ENCODE measurements at regions of chr4 and their contacts with region 1.

Region 1: DNA sequence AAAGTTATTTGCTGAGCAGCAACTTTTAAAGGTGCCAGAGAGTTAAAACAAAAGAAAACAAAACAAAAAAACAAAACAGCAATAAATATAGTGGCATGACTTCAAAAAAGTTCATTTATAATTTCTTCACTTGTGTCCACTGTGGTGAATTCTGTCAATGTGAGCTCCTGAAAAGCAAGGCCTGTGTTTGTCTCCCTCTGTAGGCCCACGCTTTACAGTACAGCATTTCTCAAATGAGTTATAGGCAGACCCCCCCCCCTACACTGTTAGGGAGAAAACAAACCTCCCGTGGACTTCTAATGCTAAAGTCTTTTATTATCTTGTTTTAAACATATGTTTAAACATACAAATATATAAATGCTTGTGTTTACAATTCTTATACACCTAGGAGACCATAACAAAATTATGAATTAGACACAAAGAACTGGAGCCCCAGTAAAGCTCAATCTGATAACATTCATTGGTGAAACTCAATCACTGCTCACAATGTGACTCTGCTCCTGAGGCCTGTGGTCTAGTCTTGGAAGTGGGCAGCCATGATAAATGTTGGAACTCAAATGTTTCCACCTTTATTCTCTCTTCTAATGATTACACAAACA is 47.0 kb upstream of the SCOC start:
- DNase-seq: no peak
- ATAC-seq: no peak
- H3K4me3 ChIP-seq: no peak overlapping the region
- H3K4me3 Mint-ChIP-seq: no peak overlapping the region
- H3K27ac ChIP-seq: no peak overlapping the region
- H3K27ac Mint-ChIP-seq: no peak overlapping the region
- H3K4me1 ChIP-seq: no peaks in the 10 kb centered on the region
- H3K4me1 Mint-ChIP-seq: peaks cover 0 to 11% (median 3%) of the 10 kb centered on the region in 7 donors
- H3K27me3 ChIP-seq: no peaks in the 10 kb centered on the region
- H3K27me3 Mint-ChIP-seq: peaks cover 0 to 28% (median 4%) of the 10 kb centered on the region in 5 donors

Region 2: GRCh38 chr4:139734875-139735380 is 591.6 kb before region 1 on chr4:
- CTCF ChIA-PET with region 1: no interaction called
- POLR2A ChIA-PET with region 1: no interaction called
- intact Hi-C with region 1: loop called in 1 of 2 experiments (anchors 10 kb)
- DNase-seq: peak; percentile 12 to 67 (median 45)
- ATAC-seq: peak; percentile 87
- H3K4me3 ChIP-seq: peak overlapping the region; percentile 44
- H3K4me3 Mint-ChIP-seq: peak overlapping the region; percentile 70 to 89 (median 78)
- H3K27ac ChIP-seq: no peak overlapping the region
- H3K27ac Mint-ChIP-seq: peak overlapping the region in 1 of 9 donors; percentile 29
- H3K4me1 ChIP-seq: peaks cover 0 to 5% of the 10 kb centered on the region in 2 donors
- H3K4me1 Mint-ChIP-seq: peaks cover 6 to 17% (median 13%) of the 10 kb centered on the region in 7 donors
- H3K27me3 ChIP-seq: no peaks in the 10 kb centered on the region
- H3K27me3 Mint-ChIP-seq: peaks cover 30 to 58% (median 39%) of the 10 kb centered on the region in 5 donors

Region 3: GRCh38 chr4:140351093-140352075 is 24.9 kb after region 1 on chr4:
- CTCF ChIA-PET with region 1: interaction called, 4 read pairs
- POLR2A ChIA-PET with region 1: no interaction called
- intact Hi-C with region 1: loop called in 1 of 2 experiments (anchors 2 kb)
- DNase-seq: no peak
- ATAC-seq: no peak
- H3K4me3 ChIP-seq: no peak overlapping the region
- H3K4me3 Mint-ChIP-seq: no peak overlapping the region
- H3K27ac ChIP-seq: no peak overlapping the region
- H3K27ac Mint-ChIP-seq: peak overlapping the region in 2 of 9 donors; percentile 22 to 38
- H3K4me1 ChIP-seq: peaks cover 5 to 7% of the 10 kb centered on the region in 2 donors
- H3K4me1 Mint-ChIP-seq: peaks cover 5 to 28% (median 20%) of the 10 kb centered on the region in 7 donors
- H3K27me3 ChIP-seq: no peaks in the 10 kb centered on the region
- H3K27me3 Mint-ChIP-seq: peaks cover 0 to 22% (median 5%) of the 10 kb centered on the region in 5 donors

Region 4: GRCh38 chr4:140609548-140610425 is 283.3 kb after region 1 on chr4:
- CTCF ChIA-PET with region 1: interaction called, 3 read pairs
- POLR2A ChIA-PET with region 1: no interaction called
- intact Hi-C with region 1: loop called in 1 of 2 experiments (anchors 1 kb)
- DNase-seq: peak in 5 of 9 donors; percentile 21 to 49 (median 25)
- ATAC-seq: peak; percentile 73
- H3K4me3 ChIP-seq: no peak overlapping the region
- H3K4me3 Mint-ChIP-seq: no peak overlapping the region
- H3K27ac ChIP-seq: no peak overlapping the region
- H3K27ac Mint-ChIP-seq: no peak overlapping the region
- H3K4me1 ChIP-seq: no peaks in the 10 kb centered on the region
- H3K4me1 Mint-ChIP-seq: peaks cover 0 to 2% (median 0%) of the 10 kb centered on the region in 7 donors
- H3K27me3 ChIP-seq: no peaks in the 10 kb centered on the region
- H3K27me3 Mint-ChIP-seq: peaks cover 0 to 7% (median 0%) of the 10 kb centered on the region in 5 donors

Region 5: GRCh38 chr4:140816806-140817510 is 490.5 kb after region 1 on chr4:
- CTCF ChIA-PET with region 1: no interaction called
- POLR2A ChIA-PET with region 1: no interaction called
- intact Hi-C with region 1: no loop called
- DNase-seq: no peak
- ATAC-seq: no peak
- H3K4me3 ChIP-seq: no peak overlapping the region
- H3K4me3 Mint-ChIP-seq: no peak overlapping the region
- H3K27ac ChIP-seq: no peak overlapping the region
- H3K27ac Mint-ChIP-seq: no peak overlapping the region
- H3K4me1 ChIP-seq: no peaks in the 10 kb centered on the region
- H3K4me1 Mint-ChIP-seq: peaks cover 0 to 1% (median 0%) of the 10 kb centered on the region in 7 donors
- H3K27me3 ChIP-seq: no peaks in the 10 kb centered on the region
- H3K27me3 Mint-ChIP-seq: peaks cover 3 to 11% (median 4%) of the 10 kb centered on the region in 5 donors

Region 6: DNA sequence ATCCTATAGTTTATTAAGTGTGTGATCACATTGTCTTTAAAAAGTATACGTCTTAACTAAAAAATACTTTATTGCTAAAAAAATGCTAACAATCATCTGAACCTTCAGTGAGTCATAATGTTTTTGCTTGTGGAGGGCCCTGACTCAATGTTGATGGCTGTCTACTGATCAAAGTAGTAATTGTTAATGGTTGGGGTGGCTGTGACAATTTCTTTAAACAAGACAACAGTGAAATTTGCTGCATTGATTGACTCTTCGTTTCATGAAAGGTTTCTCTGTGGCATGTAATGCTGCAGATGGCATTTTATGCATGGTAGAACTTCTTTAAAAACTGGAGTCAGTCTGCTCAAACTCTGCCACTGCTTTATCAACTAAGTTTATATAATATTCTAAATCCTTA is 1208.5 kb after region 1 on chr4:
- CTCF ChIA-PET with region 1: no interaction called
- POLR2A ChIA-PET with region 1: no interaction called
- intact Hi-C with region 1: no loop called
- DNase-seq: no peak
- ATAC-seq: no peak
- H3K4me3 ChIP-seq: no peak overlapping the region
- H3K4me3 Mint-ChIP-seq: no peak overlapping the region
- H3K27ac ChIP-seq: no peak overlapping the region
- H3K27ac Mint-ChIP-seq: no peak overlapping the region
- H3K4me1 ChIP-seq: no peaks in the 10 kb centered on the region
- H3K4me1 Mint-ChIP-seq: no peaks in the 10 kb centered on the region
- H3K27me3 ChIP-seq: no peaks in the 10 kb centered on the region
- H3K27me3 Mint-ChIP-seq: no peaks in the 10 kb centered on the region

Measured in naive thymus-derived CD4-positive, alpha-beta T cell (primary cell).